ENCODE measurements at regions of chr17 and their contacts with region 1.

Region 1: DNA sequence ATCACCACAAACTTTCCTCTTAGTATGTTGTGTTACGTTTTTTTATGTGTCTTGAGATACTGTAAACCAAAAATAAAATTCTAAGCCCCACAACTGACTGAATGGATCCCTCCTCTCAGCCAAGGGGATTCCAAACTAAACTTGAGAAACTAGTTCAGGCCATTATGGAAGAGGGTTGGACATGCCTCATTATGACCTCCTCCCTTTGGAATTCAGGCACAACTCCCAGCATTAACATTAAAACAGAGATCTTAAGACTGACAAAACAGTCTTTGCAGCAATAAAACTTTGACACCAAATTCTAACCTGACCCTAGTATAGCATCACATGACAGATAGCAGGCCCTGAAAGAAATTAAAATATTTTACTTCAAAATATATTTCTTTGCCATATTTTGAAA is 51.1 kb upstream of the SLC47A1 start:
- DNase-seq: no peak
- ATAC-seq: no peak
- H3K4me3 ChIP-seq: no peak overlapping the region
- H3K4me3 Mint-ChIP-seq: no peak overlapping the region
- H3K27ac ChIP-seq: no peak overlapping the region
- H3K27ac Mint-ChIP-seq: no peak overlapping the region
- H3K4me1 ChIP-seq: no peaks in the 10 kb centered on the region
- H3K4me1 Mint-ChIP-seq: no peaks in the 10 kb centered on the region
- H3K27me3 ChIP-seq: no peaks in the 10 kb centered on the region
- H3K27me3 Mint-ChIP-seq: no peaks in the 10 kb centered on the region
- CTCF ChIP-seq: no peak

Region 2: GRCh38 chr17:19460700-19461099 is 21.9 kb before region 1 on chr17:
- CTCF ChIA-PET with region 1: no interaction called
- POLR2A ChIA-PET with region 1: no interaction called
- intact Hi-C with region 1: loop called in 1 of 2 experiments (anchors 2 kb)
- DNase-seq: no peak
- ATAC-seq: no peak
- H3K4me3 ChIP-seq: no peak overlapping the region
- H3K4me3 Mint-ChIP-seq: no peak overlapping the region
- H3K27ac ChIP-seq: no peak overlapping the region
- H3K27ac Mint-ChIP-seq: peak overlapping the region; percentile 17
- H3K4me1 ChIP-seq: peaks cover 46% of the 10 kb centered on the region
- H3K4me1 Mint-ChIP-seq: peaks cover 57% of the 10 kb centered on the region
- H3K27me3 ChIP-seq: no peaks in the 10 kb centered on the region
- H3K27me3 Mint-ChIP-seq: no peaks in the 10 kb centered on the region
- CTCF ChIP-seq: no peak

Measured in CD4-positive, alpha-beta T cell (primary cell).